Activated CD4-positive, alpha-beta memory T cell treated with anti-CD3 and anti-CD28 coated beads, Interleukin-2, amount 10 ng/mL, durations not matched to agents 7 days and 5 days (primary cell): ENCODE measurements at regions of chr19 and their contacts with region 1.

Region 1: DNA sequence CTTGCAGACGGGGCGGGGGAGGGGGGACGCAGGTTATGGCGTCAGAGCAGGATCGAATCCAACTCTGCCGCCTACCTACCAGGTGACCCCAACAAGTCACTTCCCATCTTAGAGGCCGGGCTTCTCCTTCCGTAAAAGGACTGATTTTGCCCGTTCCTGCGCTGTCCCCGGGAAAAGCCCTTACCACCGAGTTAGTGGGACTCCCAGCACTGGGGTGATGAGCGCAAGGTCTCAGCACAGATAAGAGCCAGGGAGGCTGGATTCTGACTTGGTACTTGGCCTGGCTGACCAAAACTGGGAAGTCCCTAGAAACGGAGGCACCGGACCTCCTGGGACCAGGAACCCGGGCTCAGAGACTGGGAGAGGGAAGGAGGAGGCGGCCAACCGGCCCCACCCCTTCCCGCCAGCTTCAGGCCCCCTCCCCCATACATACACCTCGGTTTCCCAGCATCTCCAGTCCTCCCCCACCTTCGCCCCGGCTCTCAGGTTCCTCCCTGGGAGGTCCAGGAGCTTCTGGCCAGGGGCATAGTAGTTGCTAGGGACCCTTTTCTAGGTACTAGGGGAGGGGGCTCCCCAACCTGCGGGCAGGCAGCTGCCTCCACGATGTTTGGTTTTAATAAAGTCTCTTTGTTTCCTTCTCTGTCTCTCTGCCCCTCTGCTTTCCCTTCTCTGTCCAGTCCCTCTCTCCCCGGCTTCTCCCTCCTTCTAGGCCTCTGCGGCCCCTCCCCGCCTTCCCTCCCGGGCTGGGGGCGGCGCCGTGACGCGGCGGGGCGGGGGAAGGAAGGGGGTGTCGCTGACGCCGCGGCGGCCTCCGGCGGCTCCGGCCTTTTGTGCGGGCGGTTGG is at the start of gene GRAMD1A:
- DNase-seq: peak; percentile 83
- H3K4me3 Mint-ChIP-seq: peak within 1 kb of the TSS; percentile 88
- H3K27ac Mint-ChIP-seq: peak within 1 kb of the TSS; percentile 93
- H3K4me1 Mint-ChIP-seq: peaks cover 67% of the 10 kb centered on the region
- H3K27me3 Mint-ChIP-seq: no peaks in the 10 kb centered on the region
- total RNA-seq, gene GRAMD1A: 98.2 to 106 TPM

Region 2: DNA sequence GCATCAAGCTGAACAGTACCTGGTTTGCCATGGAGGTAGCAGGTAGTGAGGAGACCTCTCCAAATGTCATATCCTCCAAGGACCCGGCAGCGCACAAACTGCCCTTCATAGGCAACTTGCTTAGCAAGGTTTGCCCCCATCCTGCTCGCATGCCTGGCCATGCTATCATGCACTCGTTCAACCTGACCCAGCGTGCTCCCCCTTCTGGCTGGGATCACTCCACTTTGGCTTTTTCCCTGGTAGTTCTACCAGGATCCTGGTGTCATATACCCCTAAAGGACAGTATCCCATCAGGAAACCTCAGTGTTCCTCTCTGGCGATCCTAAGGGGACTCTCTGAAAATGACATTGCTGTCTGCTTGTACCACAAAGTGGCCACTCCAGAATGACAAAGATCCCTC is 111.6 kb before region 1 on chr19:
- CTCF ChIA-PET with region 1: no interaction called
- POLR2A ChIA-PET with region 1: no interaction called
- DNase-seq: no peak
- H3K4me3 Mint-ChIP-seq: no peak overlapping the region
- H3K27ac Mint-ChIP-seq: no peak overlapping the region
- H3K4me1 Mint-ChIP-seq: no peaks in the 10 kb centered on the region
- H3K27me3 Mint-ChIP-seq: no peaks in the 10 kb centered on the region

Region 3: DNA sequence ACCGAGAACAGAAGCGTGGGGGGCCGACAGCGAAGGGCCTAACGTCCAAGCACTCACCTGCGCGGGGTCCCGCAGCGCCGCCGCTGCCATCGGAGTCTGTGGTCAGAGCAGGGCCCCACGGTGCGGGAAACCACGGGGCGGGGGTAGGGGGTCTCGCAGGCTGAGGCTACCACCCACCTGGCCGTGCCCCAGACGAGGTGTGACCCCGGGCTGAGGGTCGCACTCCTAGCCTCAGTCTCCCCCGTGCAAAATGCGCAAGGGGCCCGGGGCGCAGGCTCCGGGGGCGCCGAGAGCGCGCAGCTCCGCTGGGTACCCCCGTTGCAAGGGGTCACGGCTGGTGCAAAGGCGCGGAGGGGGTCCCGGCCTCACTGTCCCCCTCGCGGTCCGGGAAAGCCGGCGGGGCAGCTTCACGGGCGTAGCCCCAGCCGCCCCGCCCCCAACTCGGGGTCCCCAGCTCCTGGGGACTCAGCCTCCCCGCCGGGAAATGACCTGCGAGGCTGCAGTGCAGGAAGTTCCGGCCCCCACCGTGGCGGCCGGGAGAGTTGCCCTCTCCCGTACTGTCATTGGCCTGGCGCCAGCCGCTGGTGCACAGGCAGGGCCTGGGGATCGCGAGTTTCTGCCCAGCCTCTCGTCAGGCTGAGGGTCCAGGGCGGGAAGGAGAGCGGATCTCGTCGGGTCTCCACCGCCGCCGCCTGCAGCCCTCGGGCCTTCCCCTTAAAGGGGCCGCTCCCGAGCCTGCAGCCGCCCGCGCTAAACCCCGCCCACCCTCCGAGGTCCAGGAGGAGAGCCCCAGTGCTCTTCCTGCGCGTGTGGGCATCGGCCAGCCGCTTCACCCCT is 35.9 kb before region 1 on chr19 and contains the start of gene ZNF792:
- CTCF ChIA-PET with region 1: interaction called, 5 read pairs
- POLR2A ChIA-PET with region 1: interaction called, 15 read pairs
- DNase-seq: peak; percentile 54
- H3K4me3 Mint-ChIP-seq: peak within 1 kb of the TSS; percentile 93
- H3K27ac Mint-ChIP-seq: peak within 1 kb of the TSS; percentile 79
- H3K4me1 Mint-ChIP-seq: peaks cover 29% of the 10 kb centered on the region
- H3K27me3 Mint-ChIP-seq: no peaks in the 10 kb centered on the region
- total RNA-seq, gene ZNF792: 18.3 to 18.9 TPM

Region 4: GRCh38 chr19:34974646-34975045 is 25.1 kb before region 1 on chr19:
- CTCF ChIA-PET with region 1: interaction called, 12 read pairs
- POLR2A ChIA-PET with region 1: no interaction called
- DNase-seq: no peak
- H3K4me3 Mint-ChIP-seq: no peak overlapping the region
- H3K27ac Mint-ChIP-seq: no peak overlapping the region
- H3K4me1 Mint-ChIP-seq: peaks cover 15% of the 10 kb centered on the region
- H3K27me3 Mint-ChIP-seq: no peaks in the 10 kb centered on the region

Region 5: DNA sequence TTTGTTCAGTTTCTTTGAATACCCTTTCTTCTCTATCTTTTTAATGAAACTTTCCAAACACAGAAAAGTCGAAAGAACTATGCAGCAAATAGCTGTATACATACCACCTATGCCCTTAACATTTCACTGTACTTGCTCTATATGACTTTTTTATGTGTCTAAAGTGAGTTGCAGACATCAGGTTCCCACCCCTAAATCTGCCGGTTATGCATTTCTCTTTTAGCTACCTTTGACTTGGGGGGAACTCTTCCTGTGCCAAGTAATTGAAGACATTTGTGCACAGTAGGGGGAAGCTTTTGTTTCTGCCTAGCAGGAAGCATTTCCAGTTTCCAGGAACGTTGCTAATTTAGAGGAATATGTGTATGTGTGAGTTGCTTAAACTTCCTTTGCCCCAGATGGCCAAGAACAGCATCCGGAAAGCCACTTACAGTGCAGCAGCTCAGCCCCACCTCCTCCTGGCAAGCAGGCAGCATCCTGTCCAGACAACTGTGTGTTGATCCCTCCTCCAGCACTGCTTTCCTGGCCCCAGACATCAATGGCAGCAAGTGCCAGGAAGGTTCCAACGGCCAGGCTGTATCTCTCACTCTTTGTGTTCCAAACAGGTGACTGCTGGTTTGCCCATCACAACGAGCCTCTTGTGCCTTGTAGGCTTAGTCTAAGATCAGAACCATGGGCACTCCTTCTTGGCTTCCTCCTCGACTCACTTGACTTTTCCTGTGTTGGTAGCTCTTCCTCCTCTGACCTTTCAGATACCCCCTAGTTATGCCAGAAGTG is 14.3 kb before region 1 on chr19:
- CTCF ChIA-PET with region 1: interaction called, 4 read pairs
- POLR2A ChIA-PET with region 1: interaction called, 11 read pairs
- DNase-seq: peak; percentile 31
- H3K4me3 Mint-ChIP-seq: peak overlapping the region; percentile 22
- H3K27ac Mint-ChIP-seq: peak overlapping the region; percentile 66
- H3K4me1 Mint-ChIP-seq: peaks cover 23% of the 10 kb centered on the region
- H3K27me3 Mint-ChIP-seq: peaks cover 3% of the 10 kb centered on the region

Region 6: GRCh38 chr19:35013031-35013819 is 13.5 kb after region 1 on chr19:
- CTCF ChIA-PET with region 1: interaction called, 20 read pairs
- POLR2A ChIA-PET with region 1: interaction called, 53 read pairs
- DNase-seq: peak; percentile 80
- H3K4me3 Mint-ChIP-seq: no peak overlapping the region
- H3K27ac Mint-ChIP-seq: peak overlapping the region; percentile 57
- H3K4me1 Mint-ChIP-seq: peaks cover 50% of the 10 kb centered on the region
- H3K27me3 Mint-ChIP-seq: no peaks in the 10 kb centered on the region

Region 7: GRCh38 chr19:35044317-35045117 is 44.8 kb after region 1 on chr19:
- CTCF ChIA-PET with region 1: no interaction called
- POLR2A ChIA-PET with region 1: no interaction called
- DNase-seq: peak; percentile 64
- H3K4me3 Mint-ChIP-seq: no peak overlapping the region
- H3K27ac Mint-ChIP-seq: no peak overlapping the region
- H3K4me1 Mint-ChIP-seq: peaks cover 28% of the 10 kb centered on the region
- H3K27me3 Mint-ChIP-seq: peaks cover 9% of the 10 kb centered on the region